ENCODE measurements at regions of chr5 and their contacts with region 1.

Region 1: DNA sequence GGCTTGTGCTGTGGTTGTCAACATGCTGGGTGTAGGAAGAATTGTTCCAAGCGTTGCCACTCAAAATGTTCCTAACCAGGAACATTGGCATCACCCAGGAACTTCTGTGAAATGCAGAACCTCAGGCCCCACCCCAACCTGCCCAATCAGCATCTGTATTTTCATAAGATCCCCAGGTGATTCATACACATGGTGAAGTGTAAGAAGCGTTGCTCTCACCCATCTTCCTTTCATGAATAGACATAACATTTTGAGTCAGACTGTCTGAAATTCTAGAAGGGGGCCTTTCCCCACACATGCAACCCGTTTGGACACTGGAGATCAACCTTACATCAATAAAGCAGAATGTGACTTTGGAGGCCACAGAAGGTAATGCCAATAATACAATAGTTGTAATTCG is 9.3 kb upstream of the AFAP1L1 start:
- DNase-seq: no peak
- H3K4me3 ChIP-seq: no peak overlapping the region
- H3K27ac ChIP-seq: no peak overlapping the region
- H3K4me1 ChIP-seq: no peaks in the 10 kb centered on the region
- H3K27me3 ChIP-seq: peaks cover 0 to 14% of the 10 kb centered on the region in 2 donors
- CTCF ChIP-seq: no peak

Region 2: GRCh38 chr5:147481874-147482705 is 1780.2 kb before region 1 on chr5:
- intact Hi-C with region 1: no loop called
- DNase-seq: no peak
- H3K4me3 ChIP-seq: no peak overlapping the region
- H3K27ac ChIP-seq: peak overlapping the region; percentile 61 to 62
- H3K4me1 ChIP-seq: peaks cover 0 to 52% (median 18%) of the 10 kb centered on the region in 4 donors
- H3K27me3 ChIP-seq: no peaks in the 10 kb centered on the region
- CTCF ChIP-seq: no peak

Region 3: DNA sequence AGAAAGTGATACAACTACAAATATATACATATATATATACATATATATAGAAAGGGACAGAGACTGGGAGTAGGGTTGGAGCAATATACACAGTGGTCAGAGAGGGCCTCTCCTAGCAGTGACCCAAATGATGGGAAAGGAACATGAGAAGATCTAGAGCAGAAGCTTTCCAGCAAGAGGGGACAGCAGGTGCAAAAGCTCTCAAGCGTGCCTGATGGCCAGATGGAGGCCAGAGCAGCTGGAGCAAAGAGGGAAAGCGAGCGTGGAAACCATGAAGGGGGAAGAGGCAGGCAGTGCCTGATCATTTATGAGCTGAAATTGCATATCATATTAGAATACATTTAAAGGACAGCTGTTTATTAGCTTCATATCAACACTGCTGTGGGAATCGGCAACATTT is 75.4 kb after region 1 on chr5:
- intact Hi-C with region 1: loop called (anchors 2 kb)
- DNase-seq: no peak
- H3K4me3 ChIP-seq: no peak overlapping the region
- H3K27ac ChIP-seq: no peak overlapping the region
- H3K4me1 ChIP-seq: no peaks in the 10 kb centered on the region
- H3K27me3 ChIP-seq: no peaks in the 10 kb centered on the region
- CTCF ChIP-seq: no peak

Measured in tibial artery (tissue), 4 donors.